ENCODE measurements at regions of chr11 and their contacts with region 1.

Region 1: GRCh38 chr11:75508044-75508561 is 17.6 kb downstream of the GDPD5 start:
- DNase-seq: peak; percentile 76 to 89 (median 83)
- H3K4me3 ChIP-seq: peak overlapping the region in 1 of 2 donors; percentile 8
- H3K4me3 Mint-ChIP-seq: peak overlapping the region; percentile 38 to 86 (median 72)
- H3K27ac ChIP-seq: peak overlapping the region; percentile 64
- H3K27ac Mint-ChIP-seq: peak overlapping the region; percentile 91 to 99 (median 97)
- H3K4me1 ChIP-seq: peaks cover 63% of the 10 kb centered on the region
- H3K4me1 Mint-ChIP-seq: peaks cover 33 to 91% (median 55%) of the 10 kb centered on the region in 4 donors
- H3K27me3 ChIP-seq: no peaks in the 10 kb centered on the region
- H3K27me3 Mint-ChIP-seq: no peaks in the 10 kb centered on the region

Region 2: DNA sequence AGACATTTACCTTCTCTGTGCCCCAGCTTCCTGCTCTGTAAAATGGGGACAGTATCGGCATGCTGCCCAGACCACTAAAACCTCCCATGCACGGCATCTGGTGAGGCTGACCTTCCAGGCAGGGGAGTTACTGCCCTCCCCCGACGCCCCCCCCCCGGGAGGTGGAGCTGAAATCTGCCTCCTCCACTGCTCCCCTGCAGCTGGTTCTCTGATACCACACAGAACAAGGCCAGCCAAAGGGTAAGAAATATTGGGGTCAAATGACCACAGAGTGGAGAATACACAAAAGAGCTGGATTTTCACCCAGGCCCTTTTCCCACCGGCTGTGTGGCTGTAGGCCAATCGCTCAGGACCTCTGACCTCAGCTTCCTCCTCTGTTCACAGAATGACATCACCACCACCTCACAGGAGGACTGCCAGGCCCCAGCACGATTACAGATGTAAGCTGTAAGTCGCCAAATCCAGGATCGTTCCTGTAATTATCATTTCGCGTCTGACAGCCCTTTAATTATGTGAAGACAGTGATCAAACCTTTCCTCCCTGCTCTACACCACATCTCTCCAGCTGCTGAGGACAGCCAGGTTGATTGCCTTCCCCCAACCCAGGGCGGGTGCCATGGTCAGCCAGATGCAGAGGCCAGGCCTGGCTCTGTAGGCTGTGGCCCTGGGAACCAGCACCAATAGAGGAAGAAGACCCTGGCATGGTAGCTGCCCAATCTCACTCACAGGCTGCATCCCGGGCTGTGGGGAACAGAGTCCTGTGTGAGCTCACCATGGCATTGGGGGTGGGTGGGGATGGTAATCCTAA is 39.4 kb before region 1 on chr11:
- CTCF ChIA-PET with region 1: no interaction called
- POLR2A ChIA-PET with region 1: no interaction called
- intact Hi-C with region 1: no loop called
- DNase-seq: no peak
- H3K4me3 ChIP-seq: no peak overlapping the region
- H3K4me3 Mint-ChIP-seq: no peak overlapping the region
- H3K27ac ChIP-seq: no peak overlapping the region
- H3K27ac Mint-ChIP-seq: peak overlapping the region in 1 of 7 donors; percentile 84
- H3K4me1 ChIP-seq: no peaks in the 10 kb centered on the region
- H3K4me1 Mint-ChIP-seq: peaks cover 0 to 6% (median 4%) of the 10 kb centered on the region in 4 donors
- H3K27me3 ChIP-seq: no peaks in the 10 kb centered on the region
- H3K27me3 Mint-ChIP-seq: no peaks in the 10 kb centered on the region

Region 3: GRCh38 chr11:75481922-75482606 is 26.0 kb before region 1 on chr11:
- CTCF ChIA-PET with region 1: no interaction called
- POLR2A ChIA-PET with region 1: no interaction called
- intact Hi-C with region 1: no loop called
- DNase-seq: no peak
- H3K4me3 ChIP-seq: no peak overlapping the region
- H3K4me3 Mint-ChIP-seq: no peak overlapping the region
- H3K27ac ChIP-seq: no peak overlapping the region
- H3K27ac Mint-ChIP-seq: peak overlapping the region in 6 of 7 donors; percentile 42 to 84 (median 78)
- H3K4me1 ChIP-seq: no peaks in the 10 kb centered on the region
- H3K4me1 Mint-ChIP-seq: peaks cover 4 to 15% (median 11%) of the 10 kb centered on the region in 4 donors
- H3K27me3 ChIP-seq: no peaks in the 10 kb centered on the region
- H3K27me3 Mint-ChIP-seq: no peaks in the 10 kb centered on the region

Region 4: GRCh38 chr11:75492181-75492820 is 15.8 kb before region 1 on chr11:
- CTCF ChIA-PET with region 1: interaction called, 3 read pairs
- POLR2A ChIA-PET with region 1: interaction called, 4 read pairs
- intact Hi-C with region 1: loop called (anchors 1 kb)
- DNase-seq: peak; percentile 29 to 85 (median 46)
- H3K4me3 ChIP-seq: peak overlapping the region; percentile 23 to 31
- H3K4me3 Mint-ChIP-seq: peak overlapping the region; percentile 29 to 78 (median 54)
- H3K27ac ChIP-seq: peak overlapping the region; percentile 42
- H3K27ac Mint-ChIP-seq: peak overlapping the region; percentile 75 to 88 (median 84)
- H3K4me1 ChIP-seq: peaks cover 30% of the 10 kb centered on the region
- H3K4me1 Mint-ChIP-seq: peaks cover 17 to 53% (median 29%) of the 10 kb centered on the region in 4 donors
- H3K27me3 ChIP-seq: no peaks in the 10 kb centered on the region
- H3K27me3 Mint-ChIP-seq: no peaks in the 10 kb centered on the region

Measured in CD4-positive, alpha-beta memory T cell (primary cell).